H1 (cell line): ENCODE measurements at regions of chr12 and their contacts with region 1.

Region 1: DNA sequence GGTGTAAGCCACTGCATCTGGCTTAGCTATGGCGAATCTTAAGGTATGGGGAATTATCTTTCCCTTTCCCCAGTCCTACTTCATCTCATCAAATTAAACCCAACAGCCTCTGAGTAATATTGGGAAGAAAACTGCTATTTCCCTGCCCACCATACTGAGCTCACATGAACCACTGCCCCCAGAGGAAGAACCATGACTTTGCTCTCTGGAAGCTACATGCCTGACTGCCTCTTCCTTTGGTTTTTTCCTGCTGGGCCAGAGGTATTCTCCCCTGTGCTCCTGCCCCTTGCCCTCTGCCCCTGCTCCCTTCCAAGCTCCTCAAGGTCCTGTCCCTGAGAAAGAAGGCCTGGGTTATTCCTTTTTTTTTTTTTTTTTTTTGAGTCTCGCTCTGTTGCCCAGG is 15.2 kb downstream of the RILPL2 start:
- DNase-seq: no peak
- H3K4me3 ChIP-seq: no peak overlapping the region
- H3K27ac ChIP-seq: no peak overlapping the region
- H3K4me1 ChIP-seq: no peaks in the 10 kb centered on the region
- H3K27me3 ChIP-seq: no peaks in the 10 kb centered on the region
- CTCF ChIP-seq: peak in 2 of 3 experiments; percentile 5 to 37; a peak in 1 of 4 replicates
- EP300 ChIP-seq: no peak
- POLR2A ChIP-seq: no peak
- RAD21 ChIP-seq: 0 out of 4 replicates have a peak, but pooled peaks of 1 of the 2 experiments have one; percentile 5

Region 2: DNA sequence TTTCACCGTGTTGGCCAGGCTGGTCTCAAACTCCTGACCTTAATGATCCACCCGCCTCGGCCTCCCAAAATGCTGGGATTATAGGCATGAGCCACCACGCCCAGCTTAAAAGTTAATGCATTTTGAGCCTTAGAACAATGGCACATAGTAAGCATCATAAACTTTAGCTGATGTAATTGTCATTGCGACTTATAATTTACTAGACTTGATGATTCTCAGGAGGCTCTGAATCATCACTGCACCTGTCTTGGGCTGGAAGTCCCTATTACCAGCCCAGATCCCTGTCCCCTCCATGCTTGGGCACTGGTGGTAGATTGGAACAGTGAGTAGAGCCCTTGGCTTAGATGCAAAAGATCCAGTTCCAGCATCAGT is 11.3 kb before region 1 on chr12:
- CTCF ChIA-PET with region 1: interaction called, 12 read pairs
- POLR2A ChIA-PET with region 1: interaction called, 3 read pairs
- DNase-seq: no peak
- H3K4me3 ChIP-seq: no peak overlapping the region
- H3K27ac ChIP-seq: no peak overlapping the region
- H3K4me1 ChIP-seq: no peaks in the 10 kb centered on the region
- H3K27me3 ChIP-seq: no peaks in the 10 kb centered on the region
- CTCF ChIP-seq: no peak
- EP300 ChIP-seq: no peak
- POLR2A ChIP-seq: no peak
- RAD21 ChIP-seq: no peak